Body of pancreas (tissue), 4 donors: ENCODE measurements at regions of chr3 and their contacts with region 1.

Region 1: GRCh38 chr3:49339945-49340800 is at the start of gene USP4:
- DNase-seq: peak; percentile 89 to 94 (median 92)
- ATAC-seq: peak; percentile 97
- H3K4me3 ChIP-seq: peak within 1 kb of the TSS; percentile 90 to 93
- H3K27ac ChIP-seq: peak within 1 kb of the TSS; percentile 67 to 91 (median 86)
- H3K4me1 ChIP-seq: peaks cover 28% of the 10 kb centered on the region
- H3K27me3 ChIP-seq: no peaks in the 10 kb centered on the region
- CTCF ChIP-seq: peak; percentile 9 to 85 (median 43)
- POLR2A ChIP-seq: peak; percentile 69 to 86 (median 79)
- total RNA-seq, gene USP4: 13.2 to 24.7 TPM

Region 2: DNA sequence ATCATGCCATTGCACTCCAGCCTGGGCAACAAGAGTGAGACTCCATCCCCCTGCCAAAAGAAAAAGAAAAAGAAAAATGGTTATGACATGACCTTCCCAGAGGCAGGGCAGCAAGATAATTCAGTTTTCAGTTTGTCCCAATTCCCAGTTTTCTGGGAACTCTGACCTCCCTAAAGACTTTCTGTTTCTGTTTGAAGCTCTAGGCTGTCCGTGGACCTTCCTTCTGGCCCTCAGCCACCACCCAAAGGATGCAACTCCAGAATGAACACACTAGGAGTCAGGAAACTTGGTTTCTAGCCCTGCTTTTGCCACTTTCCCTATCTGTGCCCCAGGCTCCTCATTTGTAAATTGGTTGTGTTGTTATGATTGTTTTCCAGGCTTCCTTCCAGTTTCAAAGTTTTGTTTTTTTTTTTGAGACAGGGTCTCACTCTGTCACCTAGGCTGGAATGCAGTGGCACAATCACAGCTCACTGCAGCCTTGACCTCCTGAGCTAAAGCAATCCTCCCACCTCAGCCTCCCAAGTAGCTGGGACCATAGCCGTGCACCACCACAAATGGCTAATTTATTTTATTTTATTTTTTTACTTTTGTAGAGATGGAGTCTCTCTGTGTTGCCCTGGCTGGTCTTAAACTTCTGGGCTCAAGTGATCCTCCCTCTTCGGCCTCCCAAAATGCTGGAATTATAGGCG is 1220.5 kb before region 1 on chr3:
- intact Hi-C with region 1: no loop called
- DNase-seq: peak; percentile 18 to 44 (median 32)
- ATAC-seq: peak; percentile 40
- H3K4me3 ChIP-seq: no peak overlapping the region
- H3K27ac ChIP-seq: peak overlapping the region in 1 of 4 donors; percentile 17
- H3K4me1 ChIP-seq: no peaks in the 10 kb centered on the region
- H3K27me3 ChIP-seq: no peaks in the 10 kb centered on the region
- CTCF ChIP-seq: no peak
- POLR2A ChIP-seq: no peak

Region 3: GRCh38 chr3:48727511-48727910 is 612.7 kb before region 1 on chr3:
- intact Hi-C with region 1: no loop called
- DNase-seq: no peak
- ATAC-seq: no peak
- H3K4me3 ChIP-seq: no peak overlapping the region
- H3K27ac ChIP-seq: no peak overlapping the region
- H3K4me1 ChIP-seq: no peaks in the 10 kb centered on the region
- H3K27me3 ChIP-seq: no peaks in the 10 kb centered on the region
- CTCF ChIP-seq: no peak
- POLR2A ChIP-seq: no peak

Region 4: DNA sequence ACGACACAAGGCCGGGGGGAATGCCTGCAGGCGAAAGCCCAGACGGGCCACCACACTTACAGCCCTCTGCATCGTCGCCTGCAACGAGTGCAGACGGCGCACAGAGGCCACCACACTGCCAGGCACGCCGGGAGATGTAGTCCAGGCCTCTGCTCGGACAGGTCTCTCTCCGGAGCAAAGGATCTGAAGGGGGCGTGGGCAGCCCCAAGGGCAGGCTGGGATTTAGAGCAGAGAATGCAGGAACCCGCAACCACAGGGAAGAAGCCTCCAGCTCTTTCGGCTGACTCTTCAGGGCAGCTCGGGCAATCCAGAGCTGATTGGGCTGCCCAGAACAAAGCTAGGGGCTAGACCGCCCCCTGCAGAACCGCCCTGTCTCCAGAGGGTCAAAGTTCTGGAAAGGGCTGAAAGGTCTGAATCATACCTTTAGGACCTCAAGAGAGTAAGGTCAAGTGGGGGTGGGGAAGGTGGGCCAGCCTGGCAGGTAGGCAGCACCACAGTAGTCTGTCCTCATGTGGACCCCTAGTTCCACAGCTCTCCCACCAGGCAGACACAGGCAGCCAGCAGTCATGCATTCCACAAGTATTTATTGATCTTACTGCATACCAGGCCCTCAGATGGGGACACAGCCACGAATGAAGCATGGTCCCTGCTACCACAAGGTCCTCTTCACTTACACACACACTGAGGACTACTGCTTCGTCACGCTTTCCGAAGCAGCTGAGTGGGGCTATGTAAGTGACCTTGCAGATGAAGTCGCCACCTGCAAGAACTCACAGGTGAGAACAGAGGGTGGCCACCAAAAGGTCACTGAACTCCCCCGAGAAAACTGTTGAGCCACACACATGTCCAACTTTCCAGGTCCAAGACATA is 82.4 kb after region 1 on chr3 and contains the start of gene AMT:
- intact Hi-C with region 1: loop called (anchors 10 kb)
- DNase-seq: peak; percentile 75 to 82 (median 82)
- ATAC-seq: peak; percentile 84
- H3K4me3 ChIP-seq: peak within 1 kb of the TSS in 1 of 2 donors; percentile 48
- H3K27ac ChIP-seq: peak within 1 kb of the TSS; percentile 67 to 83 (median 80)
- H3K4me1 ChIP-seq: peaks cover 36% of the 10 kb centered on the region
- H3K27me3 ChIP-seq: no peaks in the 10 kb centered on the region
- CTCF ChIP-seq: no peak
- POLR2A ChIP-seq: peak; percentile 17 to 50 (median 45)
- total RNA-seq, gene AMT: 10.9 to 27.7 TPM